Vagina (tissue), 2 donors: ENCODE measurements at regions of chr13 and their contacts with region 1.

Region 1: GRCh38 chr13:46721054-46721453 is 75.9 kb downstream of the ESD start:
- DNase-seq: no peak
- H3K4me3 ChIP-seq: no peak overlapping the region
- H3K27ac ChIP-seq: peak overlapping the region; percentile 18
- H3K4me1 ChIP-seq: no peaks in the 10 kb centered on the region
- H3K27me3 ChIP-seq: no peaks in the 10 kb centered on the region
- CTCF ChIP-seq: peak; percentile 53 to 84 (median 83)
- POLR2A ChIP-seq: no peak

Region 2: GRCh38 chr13:46553886-46554858 is 166.9 kb before region 1 on chr13:
- intact Hi-C with region 1: loop called (anchors 5 kb)
- DNase-seq: no peak
- H3K4me3 ChIP-seq: peak overlapping the region; percentile 74 to 99
- H3K27ac ChIP-seq: peak overlapping the region; percentile 97
- H3K4me1 ChIP-seq: peaks cover 32% of the 10 kb centered on the region
- H3K27me3 ChIP-seq: no peaks in the 10 kb centered on the region
- CTCF ChIP-seq: peak in 1 of 3 experiments; percentile 25
- POLR2A ChIP-seq: no peak

Region 3: DNA sequence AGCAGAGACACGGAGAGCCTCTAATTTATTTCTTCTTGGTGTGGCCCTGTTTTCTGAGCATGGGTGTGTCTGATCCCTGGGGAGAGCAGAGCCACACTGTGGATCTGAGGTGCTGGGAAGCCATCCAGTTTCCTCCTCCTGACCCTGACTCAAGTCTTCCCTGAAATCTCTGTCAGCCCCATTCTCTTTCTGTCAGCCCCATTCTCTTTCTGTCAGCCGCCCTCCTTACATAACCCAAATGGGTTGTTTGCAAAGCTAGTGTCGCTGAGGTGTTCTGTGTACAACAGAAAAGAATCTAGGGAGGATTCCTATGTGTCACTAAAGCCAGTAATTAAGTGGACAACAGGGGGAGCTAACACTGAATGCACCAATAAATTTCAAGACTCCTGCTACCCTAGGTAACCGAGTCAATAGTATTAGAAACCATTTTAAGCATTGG is 117.9 kb before region 1 on chr13:
- intact Hi-C with region 1: no loop called
- DNase-seq: no peak
- H3K4me3 ChIP-seq: no peak overlapping the region
- H3K27ac ChIP-seq: no peak overlapping the region
- H3K4me1 ChIP-seq: peaks cover 81% of the 10 kb centered on the region
- H3K27me3 ChIP-seq: no peaks in the 10 kb centered on the region
- CTCF ChIP-seq: no peak
- POLR2A ChIP-seq: no peak

Region 4: GRCh38 chr13:46639033-46639981 is 81.7 kb before region 1 on chr13:
- intact Hi-C with region 1: no loop called
- DNase-seq: no peak
- H3K4me3 ChIP-seq: no peak overlapping the region
- H3K27ac ChIP-seq: peak overlapping the region; percentile 63
- H3K4me1 ChIP-seq: peaks cover 55% of the 10 kb centered on the region
- H3K27me3 ChIP-seq: no peaks in the 10 kb centered on the region
- CTCF ChIP-seq: no peak
- POLR2A ChIP-seq: no peak